ENCODE measurements at regions of chr10 and their contacts with region 1.

Region 1: DNA sequence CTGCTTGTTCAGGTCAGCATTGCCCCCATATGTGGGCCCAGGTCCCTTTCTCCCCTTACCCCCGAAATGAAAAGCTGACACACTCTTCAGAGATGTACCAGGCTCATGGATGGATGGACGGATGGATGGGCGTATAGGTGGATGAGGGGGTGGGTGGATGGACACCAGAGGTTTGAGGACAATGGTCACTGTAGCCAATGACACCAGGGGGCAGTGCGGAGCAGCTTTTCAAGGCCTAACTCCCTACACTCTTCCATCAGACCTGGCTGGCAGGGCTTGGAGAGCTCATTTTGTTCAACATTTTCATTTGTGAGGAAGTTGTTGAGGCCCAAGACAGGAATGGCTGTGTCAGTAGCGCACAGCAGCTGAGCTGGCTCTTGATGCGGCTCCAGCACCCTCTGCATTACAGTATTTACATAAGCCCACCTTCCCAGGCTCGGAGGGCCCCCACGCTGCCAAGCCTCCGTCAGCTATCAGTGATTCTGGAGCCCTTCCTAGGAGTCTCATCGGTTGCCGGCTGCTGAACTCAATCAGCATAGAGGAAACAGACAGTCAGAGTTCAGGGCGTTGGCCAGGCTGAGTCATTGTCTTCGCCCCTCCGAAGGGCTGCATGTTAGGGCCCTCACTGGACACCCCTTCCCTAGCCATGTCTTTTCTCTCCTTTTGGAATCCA is 11.6 kb upstream of the FFAR4 start:
- DNase-seq: peak; percentile 68 to 89 (median 85)
- ATAC-seq: peak; percentile 85
- H3K4me3 ChIP-seq: no peak overlapping the region
- H3K4me1 ChIP-seq: peaks cover 16% of the 10 kb centered on the region
- CTCF ChIP-seq: peak; percentile 36

Region 2: GRCh38 chr10:93680412-93681047 is 125.6 kb after region 1 on chr10:
- intact Hi-C with region 1: loop called in 1 of 2 experiments (anchors 5 kb)
- DNase-seq: no peak
- ATAC-seq: peak; percentile 66
- H3K4me3 ChIP-seq: no peak overlapping the region
- H3K4me1 ChIP-seq: no peaks in the 10 kb centered on the region
- CTCF ChIP-seq: no peak